ENCODE measurements at regions of chr17 and their contacts with region 1.

Region 1: DNA sequence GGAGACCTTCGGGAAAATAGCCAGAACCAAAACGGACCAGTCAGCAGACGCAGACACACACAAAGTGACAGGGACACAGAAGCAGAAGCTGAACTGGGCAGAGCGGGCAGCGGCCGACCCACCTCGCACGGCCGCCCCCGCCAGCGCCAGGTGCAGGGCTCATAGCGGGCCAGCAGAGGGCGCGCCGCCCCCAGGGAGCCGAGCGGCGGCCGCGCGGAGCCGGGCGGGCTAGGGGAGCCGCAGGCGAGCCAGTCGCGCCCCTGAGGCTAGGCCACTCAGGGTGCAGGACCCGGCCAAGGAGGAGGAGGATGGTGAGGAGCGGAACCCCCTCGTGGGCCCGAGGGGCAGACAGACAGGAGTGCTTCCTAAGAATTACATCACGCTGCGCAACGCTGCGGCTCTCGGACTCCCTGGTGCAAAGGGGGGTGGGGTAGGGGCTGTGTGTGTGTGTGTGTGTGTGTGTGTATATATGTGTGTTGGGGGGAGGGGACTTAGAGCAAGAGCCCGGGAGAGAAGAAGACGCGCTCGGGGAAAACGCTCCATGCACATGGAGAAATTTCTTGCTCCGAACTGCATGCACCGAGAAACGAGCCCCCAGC is 913 bp upstream of the NOG start:
- DNase-seq: peak; percentile 48
- H3K4me3 Mint-ChIP-seq: peak overlapping the region; percentile 64
- H3K27ac Mint-ChIP-seq: no peak overlapping the region
- H3K4me1 Mint-ChIP-seq: peaks cover 19% of the 10 kb centered on the region
- H3K27me3 Mint-ChIP-seq: peaks cover 55% of the 10 kb centered on the region

Region 2: DNA sequence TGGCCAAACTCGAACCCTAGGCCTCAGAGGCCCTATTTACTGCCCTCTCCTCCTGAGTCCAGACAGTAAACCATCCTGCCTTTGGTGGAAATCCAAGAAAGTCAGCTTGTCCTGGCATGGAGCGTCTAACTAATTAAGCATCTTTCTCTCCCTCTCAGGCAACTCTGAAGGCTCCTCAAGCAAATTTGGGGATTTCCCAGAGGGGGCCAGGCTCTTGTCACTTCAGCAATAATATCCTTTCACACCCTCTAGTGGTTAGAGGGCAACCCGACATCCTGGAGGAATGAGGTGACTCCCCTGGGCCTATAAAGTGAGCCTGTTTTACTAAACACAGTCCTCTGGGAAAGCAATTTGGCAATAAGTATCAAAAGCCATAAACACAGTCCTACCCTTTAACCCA is 61.3 kb after region 1 on chr17:
- intact Hi-C with region 1: loop called (anchors 1 kb)
- DNase-seq: peak; percentile 28
- H3K4me3 Mint-ChIP-seq: no peak overlapping the region
- H3K27ac Mint-ChIP-seq: no peak overlapping the region
- H3K4me1 Mint-ChIP-seq: peaks cover 2% of the 10 kb centered on the region
- H3K27me3 Mint-ChIP-seq: peaks cover 18% of the 10 kb centered on the region

Region 3: DNA sequence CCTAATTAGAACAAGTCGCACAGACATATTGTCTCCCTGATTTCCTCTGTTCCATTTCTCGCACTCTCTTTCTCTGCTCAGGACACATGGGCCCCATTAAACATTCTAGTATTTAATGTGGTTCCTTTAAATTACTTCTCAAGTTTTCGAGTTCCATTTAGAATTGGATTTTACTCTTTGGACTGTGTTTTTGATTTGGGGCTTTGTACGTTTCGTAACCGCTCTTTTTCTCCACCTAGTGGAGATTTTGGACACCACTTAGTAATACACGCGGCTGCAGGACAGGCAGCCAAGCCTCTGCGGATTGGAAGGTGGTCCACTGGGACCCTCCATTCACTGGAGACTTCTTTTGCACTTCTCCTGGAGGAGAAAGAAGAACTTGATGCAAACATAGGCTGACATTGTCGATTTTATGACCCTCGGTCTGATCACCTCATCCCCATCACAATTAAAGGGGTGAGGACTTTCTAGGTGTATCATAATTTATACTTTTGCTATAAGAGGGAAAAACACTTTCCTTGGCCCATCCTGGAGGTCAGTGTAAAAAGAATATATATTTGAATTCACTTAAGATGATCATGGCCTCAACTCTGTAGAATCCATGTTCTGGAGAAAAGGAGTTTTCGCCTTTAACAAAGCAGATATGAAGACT is 86.7 kb after region 1 on chr17:
- intact Hi-C with region 1: loop called (anchors 2 kb)
- DNase-seq: no peak
- H3K4me3 Mint-ChIP-seq: no peak overlapping the region
- H3K27ac Mint-ChIP-seq: no peak overlapping the region
- H3K4me1 Mint-ChIP-seq: peaks cover 17% of the 10 kb centered on the region
- H3K27me3 Mint-ChIP-seq: peaks cover 45% of the 10 kb centered on the region

Region 4: DNA sequence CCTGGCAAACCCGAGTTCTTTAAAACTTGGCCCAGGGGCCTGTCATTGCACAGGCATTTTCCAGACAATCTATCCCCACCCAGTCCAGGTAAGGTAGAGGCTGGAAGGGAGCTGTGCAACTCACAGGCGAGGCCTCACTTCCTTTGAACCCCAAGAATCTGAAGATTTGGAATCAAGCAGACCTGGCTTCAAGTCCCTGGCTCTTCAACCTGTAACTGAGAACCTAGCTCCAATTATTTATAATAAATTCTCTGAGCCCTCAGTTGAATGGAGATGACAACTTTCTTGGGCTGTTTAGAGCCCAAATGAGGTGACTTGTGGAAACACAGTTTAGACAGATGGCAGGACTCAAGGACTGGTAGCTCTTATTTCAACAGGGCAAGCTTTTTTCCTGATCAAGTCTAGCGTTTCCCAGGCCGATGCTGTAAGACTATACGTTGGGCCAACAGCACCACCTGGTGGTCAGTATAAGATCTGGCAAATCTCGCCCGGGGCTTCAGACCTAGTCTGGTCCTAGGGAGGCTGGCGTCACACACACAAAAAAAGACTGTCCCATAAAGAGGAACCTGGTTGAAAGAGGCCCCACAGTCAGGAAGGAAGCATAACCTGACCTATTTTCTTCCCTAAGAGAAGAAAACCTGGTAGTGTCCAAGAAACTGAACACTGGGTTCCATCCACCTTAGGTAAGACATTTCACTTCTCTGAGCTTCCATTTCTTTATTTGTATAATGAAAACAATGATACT is 123.2 kb after region 1 on chr17:
- intact Hi-C with region 1: loop called (anchors 1 kb)
- DNase-seq: peak; percentile 54
- H3K4me3 Mint-ChIP-seq: no peak overlapping the region
- H3K27ac Mint-ChIP-seq: no peak overlapping the region
- H3K4me1 Mint-ChIP-seq: peaks cover 4% of the 10 kb centered on the region
- H3K27me3 Mint-ChIP-seq: peaks cover 14% of the 10 kb centered on the region

Region 5: GRCh38 chr17:56779898-56780733 is 187.5 kb after region 1 on chr17:
- intact Hi-C with region 1: loop called (anchors 1 kb)
- DNase-seq: peak; percentile 88
- H3K4me3 Mint-ChIP-seq: peak overlapping the region; percentile 89
- H3K27ac Mint-ChIP-seq: peak overlapping the region; percentile 92
- H3K4me1 Mint-ChIP-seq: peaks cover 27% of the 10 kb centered on the region
- H3K27me3 Mint-ChIP-seq: no peaks in the 10 kb centered on the region

Region 6: DNA sequence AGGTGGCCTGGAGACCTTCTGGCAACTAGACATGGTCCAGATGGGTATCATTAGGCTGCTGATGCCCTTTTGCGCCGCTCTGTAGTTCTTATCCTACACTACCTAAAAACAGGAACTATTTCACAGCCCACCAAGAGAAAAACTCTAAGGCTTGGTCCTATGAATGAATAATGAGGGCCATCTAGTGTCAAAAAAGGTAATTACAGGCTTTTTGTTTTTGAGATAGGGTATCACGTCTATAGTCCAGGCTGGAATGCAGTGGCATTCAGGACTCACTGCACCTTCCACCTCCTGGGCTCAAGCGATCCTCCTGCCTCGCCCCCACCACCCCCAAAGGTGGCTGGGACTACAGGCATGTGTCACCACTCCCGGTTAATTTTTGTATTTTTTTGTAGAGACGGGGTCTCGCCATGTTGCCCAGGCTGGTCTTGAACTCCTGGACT is 347.3 kb after region 1 on chr17:
- intact Hi-C with region 1: loop called (anchors 10 kb)
- DNase-seq: no peak
- H3K4me3 Mint-ChIP-seq: no peak overlapping the region
- H3K27ac Mint-ChIP-seq: peak overlapping the region; percentile 65
- H3K4me1 Mint-ChIP-seq: peaks cover 25% of the 10 kb centered on the region
- H3K27me3 Mint-ChIP-seq: no peaks in the 10 kb centered on the region

Measured in activated T-helper 2 cell treated with anti-CD3 and anti-CD28 coated beads, Interferon-gamma antibody, Interleukin-2, Interleukin-4, amounts not matched to agents 10 μg/mL and 5 μg/mL and 100 μg/mL, durations not matched to agents 14 hours and 24 hours and 36 hours (primary cell).